HAP-1 (cell line): ENCODE measurements at regions of chr4 and their contacts with region 1.

Region 1: GRCh38 chr4:184983672-184984356 is 34.5 kb upstream of the HELT start:
- DNase-seq: peak; percentile 18 to 88
- H3K4me3 ChIP-seq: no peak overlapping the region
- H3K4me1 ChIP-seq: no peaks in the 10 kb centered on the region
- H3K27me3 ChIP-seq: no peaks in the 10 kb centered on the region

Region 2: GRCh38 chr4:184745831-184746795 is 237.7 kb before region 1 on chr4:
- in situ Hi-C with region 1: loop called (anchors 10 kb)
- DNase-seq: peak; percentile 58 to 79
- H3K4me3 ChIP-seq: no peak overlapping the region
- H3K4me1 ChIP-seq: no peaks in the 10 kb centered on the region
- H3K27me3 ChIP-seq: no peaks in the 10 kb centered on the region

Region 3: GRCh38 chr4:184845367-184846021 is 138.3 kb before region 1 on chr4:
- in situ Hi-C with region 1: no loop called
- DNase-seq: no peak
- H3K4me3 ChIP-seq: no peak overlapping the region
- H3K4me1 ChIP-seq: no peaks in the 10 kb centered on the region
- H3K27me3 ChIP-seq: peaks cover 8% of the 10 kb centered on the region; the same call in 1 of the 2 replicates

Region 4: DNA sequence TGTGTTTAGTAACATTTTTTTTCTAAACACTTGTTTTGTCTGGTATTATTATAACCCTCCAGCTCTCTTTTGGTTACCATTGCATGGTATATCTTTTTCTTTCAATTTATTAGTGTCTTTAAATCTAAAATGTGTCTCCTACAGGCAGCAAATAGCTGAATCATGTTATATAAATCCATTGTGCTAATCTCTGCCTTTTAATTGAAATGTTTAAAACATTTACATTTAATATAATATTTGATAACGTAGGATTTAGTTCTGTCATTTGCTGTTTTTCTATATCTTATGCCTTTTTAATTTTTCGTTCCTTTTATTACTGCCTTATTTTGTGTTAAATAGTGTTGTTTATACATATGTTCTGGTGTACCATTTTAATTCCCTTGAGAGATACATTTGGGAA is 504.8 kb after region 1 on chr4:
- in situ Hi-C with region 1: no loop called
- DNase-seq: no peak
- H3K4me3 ChIP-seq: no peak overlapping the region
- H3K4me1 ChIP-seq: no peaks in the 10 kb centered on the region
- H3K27me3 ChIP-seq: no peaks in the 10 kb centered on the region